B cell (primary cell): ENCODE measurements at regions of chr1 and their contacts with region 1.

Region 1: GRCh38 chr1:205227584-205228006 is at the start of gene TMCC2:
- DNase-seq: peak; percentile 83
- ATAC-seq: peak; percentile 87
- H3K4me3 ChIP-seq: peak within 1 kb of the TSS; percentile 21 to 73 (median 59)
- H3K4me3 Mint-ChIP-seq: peak within 1 kb of the TSS; percentile 97
- H3K27ac ChIP-seq: no peak within 1 kb of the TSS
- H3K27ac Mint-ChIP-seq: peak within 1 kb of the TSS; percentile 77
- H3K4me1 ChIP-seq: peaks cover 17 to 33% of the 10 kb centered on the region in 2 donors
- H3K4me1 Mint-ChIP-seq: peaks cover 30% of the 10 kb centered on the region
- H3K27me3 ChIP-seq: peaks cover 0 to 14% (median 2%) of the 10 kb centered on the region in 4 experiments
- H3K27me3 Mint-ChIP-seq: peaks cover 21% of the 10 kb centered on the region
- CTCF ChIP-seq: no peak
- total RNA-seq, gene TMCC2: 3.3 and 4.0 TPM in 2 replicates

Region 2: GRCh38 chr1:205032508-205032907 is 195.1 kb before region 1 on chr1:
- CTCF ChIA-PET with region 1: no interaction called
- POLR2A ChIA-PET with region 1: no interaction called
- intact Hi-C with region 1: no loop called
- DNase-seq: no peak
- ATAC-seq: no peak
- H3K4me3 ChIP-seq: no peak overlapping the region
- H3K4me3 Mint-ChIP-seq: no peak overlapping the region
- H3K27ac ChIP-seq: no peak overlapping the region
- H3K27ac Mint-ChIP-seq: no peak overlapping the region
- H3K4me1 ChIP-seq: no peaks in the 10 kb centered on the region
- H3K4me1 Mint-ChIP-seq: peaks cover 1% of the 10 kb centered on the region
- H3K27me3 ChIP-seq: no peaks in the 10 kb centered on the region
- H3K27me3 Mint-ChIP-seq: peaks cover 23% of the 10 kb centered on the region
- CTCF ChIP-seq: no peak

Region 3: GRCh38 chr1:205121660-205122488 is 105.7 kb before region 1 on chr1 and contains the start of gene RBBP5:
- CTCF ChIA-PET with region 1: interaction called, 5 read pairs
- POLR2A ChIA-PET with region 1: interaction called, 3 read pairs
- intact Hi-C with region 1: loop called (anchors 1 kb)
- DNase-seq: peak; percentile 99
- ATAC-seq: peak; percentile 93
- H3K4me3 ChIP-seq: peak within 1 kb of the TSS; percentile 74 to 99 (median 87)
- H3K4me3 Mint-ChIP-seq: peak within 1 kb of the TSS; percentile 98
- H3K27ac ChIP-seq: peak within 1 kb of the TSS; percentile 95 to 96
- H3K27ac Mint-ChIP-seq: peak within 1 kb of the TSS; percentile 100
- H3K4me1 ChIP-seq: peaks cover 31 to 40% of the 10 kb centered on the region in 2 donors
- H3K4me1 Mint-ChIP-seq: peaks cover 48% of the 10 kb centered on the region
- H3K27me3 ChIP-seq: no peaks in the 10 kb centered on the region
- H3K27me3 Mint-ChIP-seq: no peaks in the 10 kb centered on the region
- CTCF ChIP-seq: peak; percentile 73
- total RNA-seq, gene RBBP5: 18.5 and 31.7 TPM in 2 replicates

Region 4: DNA sequence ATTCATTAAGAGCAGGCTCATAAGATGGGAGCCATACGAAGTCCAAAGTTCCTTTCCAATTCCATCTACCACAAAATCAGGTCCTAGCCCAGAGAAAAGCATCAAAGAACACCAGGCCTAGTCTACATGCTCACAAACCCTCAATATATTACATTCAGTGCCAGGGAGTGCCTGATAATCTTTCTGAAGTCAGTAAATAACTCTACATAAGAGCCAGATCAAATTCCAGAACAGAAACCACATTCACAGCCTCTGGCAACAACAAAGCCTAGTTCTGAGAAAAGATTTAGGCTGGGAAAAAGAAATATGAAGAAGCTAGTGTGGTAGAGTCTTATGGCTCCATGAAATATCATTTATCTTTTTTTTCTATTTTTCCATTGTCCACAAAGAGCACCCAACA is 65.3 kb before region 1 on chr1:
- CTCF ChIA-PET with region 1: no interaction called
- POLR2A ChIA-PET with region 1: no interaction called
- intact Hi-C with region 1: no loop called
- DNase-seq: no peak
- ATAC-seq: no peak
- H3K4me3 ChIP-seq: no peak overlapping the region
- H3K4me3 Mint-ChIP-seq: no peak overlapping the region
- H3K27ac ChIP-seq: no peak overlapping the region
- H3K27ac Mint-ChIP-seq: no peak overlapping the region
- H3K4me1 ChIP-seq: no peaks in the 10 kb centered on the region
- H3K4me1 Mint-ChIP-seq: no peaks in the 10 kb centered on the region
- H3K27me3 ChIP-seq: no peaks in the 10 kb centered on the region
- H3K27me3 Mint-ChIP-seq: no peaks in the 10 kb centered on the region
- CTCF ChIP-seq: no peak

Region 5: DNA sequence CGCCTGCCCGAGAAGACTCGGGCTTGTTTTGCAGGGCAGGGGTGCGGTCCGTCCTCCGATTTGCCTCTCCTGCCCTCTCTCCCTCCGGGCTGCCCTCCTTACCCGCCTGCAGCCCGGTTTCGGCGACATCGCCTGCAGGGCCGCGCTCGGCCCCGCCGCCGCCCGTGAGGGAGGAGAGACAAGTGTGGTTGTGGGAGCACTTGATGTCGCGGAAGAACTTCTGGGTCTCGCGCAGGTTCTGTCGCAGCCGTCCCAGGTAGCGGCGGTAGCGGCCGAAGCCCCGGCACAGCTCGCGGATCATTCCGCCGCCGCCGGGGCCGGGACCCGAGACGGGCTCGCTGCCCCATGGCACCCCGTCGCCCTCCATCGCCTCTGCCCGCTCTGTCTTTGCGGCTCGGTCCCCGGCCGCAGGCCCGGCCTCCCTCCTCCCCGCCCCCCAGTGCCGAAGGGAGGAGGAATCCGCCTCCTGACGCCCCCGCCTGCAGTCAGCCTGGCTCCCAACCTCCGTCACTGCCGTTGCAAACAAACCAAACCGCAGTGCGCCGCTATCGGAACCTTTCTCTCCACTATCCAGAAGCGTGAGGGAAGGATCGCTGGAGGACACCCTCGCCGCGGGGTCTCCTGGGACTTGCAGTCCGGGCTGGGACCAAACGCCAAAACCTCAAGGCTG is 16.3 kb before region 1 on chr1 and contains the start of gene DSTYK:
- CTCF ChIA-PET with region 1: interaction called, 6 read pairs
- POLR2A ChIA-PET with region 1: interaction called, 8 read pairs
- intact Hi-C with region 1: loop called (anchors 1 kb)
- DNase-seq: peak; percentile 96
- ATAC-seq: peak; percentile 85
- H3K4me3 ChIP-seq: peak within 1 kb of the TSS; percentile 70 to 96 (median 91)
- H3K4me3 Mint-ChIP-seq: peak within 1 kb of the TSS; percentile 96
- H3K27ac ChIP-seq: peak within 1 kb of the TSS; percentile 64 to 75
- H3K27ac Mint-ChIP-seq: peak within 1 kb of the TSS; percentile 96
- H3K4me1 ChIP-seq: peaks cover 22 to 25% of the 10 kb centered on the region in 2 donors
- H3K4me1 Mint-ChIP-seq: peaks cover 48% of the 10 kb centered on the region
- H3K27me3 ChIP-seq: no peaks in the 10 kb centered on the region
- H3K27me3 Mint-ChIP-seq: no peaks in the 10 kb centered on the region
- CTCF ChIP-seq: no peak
- total RNA-seq, gene DSTYK: 15.2 and 15.7 TPM in 2 replicates

Region 6: DNA sequence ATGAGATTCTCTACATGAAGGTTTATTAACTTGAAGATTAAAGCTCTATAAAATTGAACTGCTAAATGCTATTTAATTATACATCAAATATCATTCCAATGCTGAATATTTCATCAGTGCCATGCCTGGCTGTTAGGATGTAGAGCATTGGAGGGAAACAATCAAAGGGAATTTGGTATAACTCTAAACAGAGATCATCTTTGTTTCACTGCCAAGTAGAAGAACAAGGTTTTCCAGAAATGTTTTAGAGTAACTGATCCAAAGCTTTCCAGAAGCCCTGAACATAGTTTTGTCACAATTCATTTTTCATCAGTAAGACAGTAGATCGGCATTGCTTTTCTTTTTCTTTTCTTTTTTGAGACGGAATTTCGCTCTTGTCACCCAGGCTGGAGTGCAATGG is 10.2 kb before region 1 on chr1:
- CTCF ChIA-PET with region 1: interaction called, 16 read pairs
- POLR2A ChIA-PET with region 1: interaction called, 8 read pairs
- intact Hi-C with region 1: no loop called
- DNase-seq: no peak
- ATAC-seq: no peak
- H3K4me3 ChIP-seq: no peak overlapping the region
- H3K4me3 Mint-ChIP-seq: no peak overlapping the region
- H3K27ac ChIP-seq: no peak overlapping the region
- H3K27ac Mint-ChIP-seq: no peak overlapping the region
- H3K4me1 ChIP-seq: peaks cover 7 to 8% of the 10 kb centered on the region in 2 donors
- H3K4me1 Mint-ChIP-seq: peaks cover 15% of the 10 kb centered on the region
- H3K27me3 ChIP-seq: no peaks in the 10 kb centered on the region
- H3K27me3 Mint-ChIP-seq: peaks cover 14% of the 10 kb centered on the region
- CTCF ChIP-seq: no peak

Region 7: DNA sequence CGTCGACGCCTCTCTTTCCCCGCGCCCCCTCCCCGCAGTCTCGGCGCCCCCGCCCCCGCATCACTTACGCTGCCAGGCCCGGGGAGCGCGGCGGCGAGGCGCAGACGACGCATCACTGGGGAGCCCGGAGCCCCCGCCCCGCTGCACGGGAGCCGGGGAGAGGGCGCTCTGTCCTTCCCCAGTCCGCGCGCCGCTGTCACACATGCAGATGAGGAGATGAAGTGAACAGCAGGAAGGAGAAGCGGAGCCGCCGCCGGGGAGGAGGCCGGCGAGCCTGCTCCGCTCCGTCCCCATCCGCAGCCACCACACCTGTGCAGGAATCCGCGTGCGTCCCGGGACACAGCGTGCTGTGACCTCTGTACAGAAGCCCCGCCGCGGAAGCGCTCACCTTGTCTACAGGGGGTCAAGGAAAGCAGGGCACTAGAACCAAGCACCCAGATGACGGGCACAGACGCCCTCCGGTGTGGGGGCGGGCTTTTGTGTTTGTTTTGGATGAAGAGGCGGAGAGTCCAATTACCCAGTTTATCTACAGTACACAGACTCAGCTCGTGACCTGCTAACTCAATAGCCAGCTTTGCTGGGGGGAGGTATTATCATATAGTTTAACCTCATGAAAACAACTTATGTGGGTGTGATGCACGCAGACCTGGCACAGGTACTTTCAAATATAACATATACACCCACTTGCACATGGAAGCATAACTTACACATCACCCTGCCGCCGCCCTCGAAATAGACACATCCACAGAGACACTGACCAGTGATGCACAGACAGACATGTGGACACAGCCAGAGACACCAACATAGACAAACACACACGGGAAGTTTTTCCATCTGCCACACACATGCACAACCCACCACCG is 116.7 kb after region 1 on chr1:
- CTCF ChIA-PET with region 1: no interaction called
- POLR2A ChIA-PET with region 1: no interaction called
- intact Hi-C with region 1: no loop called
- DNase-seq: peak; percentile 69
- ATAC-seq: peak; percentile 61
- H3K4me3 ChIP-seq: peak overlapping the region in 4 of 5 experiments; percentile 37 to 51 (median 50)
- H3K4me3 Mint-ChIP-seq: peak overlapping the region; percentile 84
- H3K27ac ChIP-seq: no peak overlapping the region
- H3K27ac Mint-ChIP-seq: peak overlapping the region; percentile 32
- H3K4me1 ChIP-seq: peaks cover 34 to 42% of the 10 kb centered on the region in 2 donors
- H3K4me1 Mint-ChIP-seq: peaks cover 48% of the 10 kb centered on the region
- H3K27me3 ChIP-seq: peaks cover 0 to 20% (median 10%) of the 10 kb centered on the region in 4 experiments
- H3K27me3 Mint-ChIP-seq: peaks cover 8% of the 10 kb centered on the region
- CTCF ChIP-seq: no peak